Esophagus muscularis mucosa (tissue), 4 donors: ENCODE measurements at regions of chr7 and their contacts with region 1.

Region 1: GRCh38 chr7:140653319-140654108 is 12.9 kb upstream of the DENND2A start:
- DNase-seq: no peak
- H3K4me3 ChIP-seq: no peak overlapping the region
- H3K27ac ChIP-seq: peak overlapping the region in 3 of 4 donors; percentile 34 to 58 (median 53)
- H3K4me1 ChIP-seq: peaks cover 27 to 37% (median 31%) of the 10 kb centered on the region in 4 donors
- H3K27me3 ChIP-seq: no peaks in the 10 kb centered on the region
- CTCF ChIP-seq: peak; percentile 79 to 92 (median 90)
- EP300 ChIP-seq: no peak
- POLR2A ChIP-seq: no peak

Region 2: DNA sequence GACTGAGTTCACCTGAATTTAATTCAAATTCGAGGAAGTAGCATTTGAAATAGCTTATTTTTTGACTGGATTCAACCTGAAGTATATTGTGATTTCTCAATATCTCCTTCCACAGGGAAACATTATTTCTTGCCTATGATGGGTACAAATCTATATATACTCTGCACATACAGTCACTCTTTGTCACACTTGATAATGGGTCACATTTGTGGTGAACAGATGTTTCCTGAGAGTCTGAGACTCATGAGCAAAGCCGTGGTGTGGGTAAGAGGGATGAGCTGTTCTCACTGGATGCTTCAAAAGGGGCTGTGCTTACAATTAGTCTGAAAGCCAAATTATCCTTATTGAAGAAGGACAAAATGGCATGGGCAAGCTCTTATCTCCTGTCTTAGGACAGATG is 842.4 kb before region 1 on chr7:
- intact Hi-C with region 1: no loop called
- DNase-seq: no peak
- H3K4me3 ChIP-seq: no peak overlapping the region
- H3K27ac ChIP-seq: no peak overlapping the region
- H3K4me1 ChIP-seq: no peaks in the 10 kb centered on the region
- H3K27me3 ChIP-seq: no peaks in the 10 kb centered on the region
- CTCF ChIP-seq: no peak
- EP300 ChIP-seq: no peak
- POLR2A ChIP-seq: no peak

Region 3: GRCh38 chr7:140479062-140479738 is 174.3 kb before region 1 on chr7 and contains the start of gene MKRN1:
- intact Hi-C with region 1: loop called (anchors 5 kb)
- DNase-seq: peak; percentile 96
- H3K4me3 ChIP-seq: peak within 1 kb of the TSS; percentile 89 to 99 (median 96)
- H3K27ac ChIP-seq: peak within 1 kb of the TSS; percentile 89 to 94 (median 93)
- H3K4me1 ChIP-seq: peaks cover 21 to 36% (median 31%) of the 10 kb centered on the region in 4 donors
- H3K27me3 ChIP-seq: no peaks in the 10 kb centered on the region
- CTCF ChIP-seq: no peak
- EP300 ChIP-seq: no peak
- POLR2A ChIP-seq: no peak
- total RNA-seq, gene MKRN1: 66.4 to 105 (median 77.9) TPM

Region 4: DNA sequence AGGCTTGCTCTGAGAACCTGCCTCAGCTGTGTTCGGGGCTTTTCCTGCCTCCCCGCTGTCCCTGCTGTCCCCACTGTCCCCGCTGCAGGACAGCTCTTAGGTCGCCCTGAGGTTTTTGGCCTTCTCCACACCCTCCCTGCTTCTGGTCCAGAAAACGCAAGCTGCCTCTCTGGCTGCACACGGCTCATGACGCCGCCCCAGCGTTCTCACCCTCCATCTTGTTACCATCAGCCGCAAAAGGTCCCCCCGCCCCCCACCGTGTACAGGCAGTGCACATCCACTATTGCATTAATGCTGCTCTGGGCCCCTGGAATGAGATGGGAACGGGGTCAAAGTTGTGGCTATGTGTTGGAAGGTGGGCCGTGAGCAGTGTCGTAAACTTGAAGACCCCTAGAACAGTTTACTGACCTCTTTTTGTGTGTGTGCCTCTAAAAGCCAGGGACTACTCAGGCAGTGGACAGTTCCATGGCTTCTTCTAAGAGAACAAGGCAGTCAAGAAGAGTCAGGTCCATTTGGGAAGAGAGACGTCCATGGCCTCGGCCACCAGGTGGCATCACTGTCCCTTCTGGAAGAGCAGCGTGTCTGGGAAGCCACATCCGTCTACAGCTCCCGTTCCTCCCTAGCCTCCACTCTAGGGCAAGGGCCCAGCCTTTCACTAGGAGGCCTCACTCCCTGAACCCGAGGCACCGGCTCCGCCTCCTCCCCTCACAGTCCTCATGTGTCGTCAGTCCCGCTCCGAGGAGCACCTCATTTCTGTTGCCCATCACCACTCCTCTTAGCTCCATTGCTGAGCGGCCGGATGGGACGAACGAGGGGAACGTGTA is 135.8 kb before region 1 on chr7:
- intact Hi-C with region 1: loop called (anchors 1 kb)
- DNase-seq: no peak
- H3K4me3 ChIP-seq: no peak overlapping the region
- H3K27ac ChIP-seq: peak overlapping the region; percentile 78 to 86 (median 84)
- H3K4me1 ChIP-seq: peaks cover 19 to 35% (median 32%) of the 10 kb centered on the region in 4 donors
- H3K27me3 ChIP-seq: no peaks in the 10 kb centered on the region
- CTCF ChIP-seq: peak; percentile 88 to 89 (median 88)
- EP300 ChIP-seq: no peak
- POLR2A ChIP-seq: no peak

Region 5: DNA sequence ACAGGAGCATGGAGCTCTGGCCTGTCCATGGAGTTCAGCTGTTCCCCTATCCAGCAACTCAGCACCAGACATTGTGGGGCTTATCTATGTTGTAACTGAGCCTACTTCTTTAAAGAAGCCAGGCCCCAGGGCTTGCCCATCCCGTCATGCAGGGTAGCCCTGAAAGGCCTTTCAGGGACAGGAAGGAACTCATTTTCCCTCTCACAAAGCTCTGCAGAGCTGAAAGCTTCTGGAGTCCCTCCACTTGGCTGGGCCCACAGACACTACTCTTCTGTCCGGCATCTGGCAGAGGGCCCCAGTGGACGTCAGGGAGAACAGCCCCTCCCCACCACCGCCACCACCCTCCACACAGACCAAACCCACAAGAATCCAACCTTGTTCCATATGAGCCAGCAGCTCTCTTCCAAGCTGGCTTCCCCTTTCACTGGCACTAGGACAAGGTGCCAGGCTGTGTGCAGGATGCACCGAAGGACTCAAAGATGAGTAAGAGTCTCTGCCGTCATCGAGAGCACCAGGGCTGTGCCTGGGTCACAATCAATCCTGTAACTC is 46.0 kb before region 1 on chr7:
- intact Hi-C with region 1: no loop called
- DNase-seq: no peak
- H3K4me3 ChIP-seq: no peak overlapping the region
- H3K27ac ChIP-seq: peak overlapping the region; percentile 68 to 77 (median 72)
- H3K4me1 ChIP-seq: peaks cover 43 to 71% (median 71%) of the 10 kb centered on the region in 4 donors
- H3K27me3 ChIP-seq: no peaks in the 10 kb centered on the region
- CTCF ChIP-seq: no peak
- EP300 ChIP-seq: no peak
- POLR2A ChIP-seq: no peak